CD4-positive, alpha-beta memory T cell (primary cell): ENCODE measurements at regions of chr15 and their contacts with region 1.

Region 1: DNA sequence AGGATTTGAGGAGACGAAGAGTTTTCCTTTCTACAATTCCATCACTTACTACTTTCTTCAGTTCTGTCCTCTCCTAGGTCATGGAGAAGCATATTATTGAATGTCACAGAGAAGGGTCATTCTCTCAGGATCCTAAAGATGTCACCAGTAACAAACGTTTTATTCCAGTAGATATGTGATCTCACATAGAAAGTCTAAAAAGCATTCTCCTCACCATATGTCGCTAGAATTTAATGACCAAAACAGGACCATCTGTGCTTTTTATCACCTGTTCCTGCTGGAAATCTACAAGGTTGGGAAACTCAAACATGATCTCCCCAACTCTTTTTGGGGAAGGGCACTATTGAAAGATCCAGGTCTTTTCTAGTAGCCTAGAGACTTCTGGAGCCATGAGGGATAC is 24.0 kb upstream of the FRMD5 start:
- DNase-seq: no peak
- H3K4me3 ChIP-seq: no peak overlapping the region
- H3K4me3 Mint-ChIP-seq: no peak overlapping the region
- H3K27ac ChIP-seq: no peak overlapping the region
- H3K27ac Mint-ChIP-seq: no peak overlapping the region
- H3K4me1 ChIP-seq: peaks cover 3% of the 10 kb centered on the region
- H3K4me1 Mint-ChIP-seq: peaks cover 2 to 4% (median 3%) of the 10 kb centered on the region in 4 donors
- H3K27me3 ChIP-seq: no peaks in the 10 kb centered on the region
- H3K27me3 Mint-ChIP-seq: peaks cover 12 to 15% of the 10 kb centered on the region in 2 donors

Region 2: GRCh38 chr15:44207643-44208042 is 11.4 kb before region 1 on chr15:
- CTCF ChIA-PET with region 1: interaction called, 14 read pairs
- POLR2A ChIA-PET with region 1: no interaction called
- intact Hi-C with region 1: no loop called
- DNase-seq: no peak
- H3K4me3 ChIP-seq: no peak overlapping the region
- H3K4me3 Mint-ChIP-seq: no peak overlapping the region
- H3K27ac ChIP-seq: no peak overlapping the region
- H3K27ac Mint-ChIP-seq: no peak overlapping the region
- H3K4me1 ChIP-seq: no peaks in the 10 kb centered on the region
- H3K4me1 Mint-ChIP-seq: no peaks in the 10 kb centered on the region
- H3K27me3 ChIP-seq: peaks cover 4% of the 10 kb centered on the region
- H3K27me3 Mint-ChIP-seq: peaks cover 9 to 15% of the 10 kb centered on the region in 2 donors

Region 3: DNA sequence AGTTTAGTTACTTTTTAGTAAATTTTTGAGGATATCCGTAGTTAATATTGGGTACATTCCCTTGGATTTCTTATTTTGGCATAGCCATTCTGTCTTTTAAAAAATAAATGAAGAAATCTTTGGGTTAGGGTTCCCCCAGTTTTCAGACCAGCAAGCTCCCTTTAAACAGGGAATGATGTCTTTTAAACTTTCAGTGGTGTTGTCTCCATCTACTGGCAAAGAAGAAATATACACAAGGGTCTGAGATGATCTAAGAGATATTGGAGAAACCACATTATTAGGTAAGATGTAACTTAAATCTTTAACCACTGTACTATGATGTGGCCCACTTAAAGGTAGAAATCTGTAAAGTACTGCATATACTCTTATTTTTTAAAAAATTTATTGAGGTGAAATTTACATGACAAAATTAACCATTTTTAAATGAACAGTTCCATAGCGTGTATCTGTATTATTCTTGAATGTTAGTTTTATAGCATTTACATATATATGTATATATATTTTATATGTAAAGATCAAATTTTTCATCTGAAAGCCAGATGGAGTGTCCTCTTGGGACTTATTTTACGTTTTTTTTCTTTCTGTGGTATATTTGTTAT is 282.8 kb after region 1 on chr15:
- CTCF ChIA-PET with region 1: interaction called, 4 read pairs
- POLR2A ChIA-PET with region 1: no interaction called
- intact Hi-C with region 1: loop called (anchors 1 kb)
- DNase-seq: peak in 4 of 5 donors; percentile 16 to 34 (median 26)
- H3K4me3 ChIP-seq: no peak overlapping the region
- H3K4me3 Mint-ChIP-seq: no peak overlapping the region
- H3K27ac ChIP-seq: no peak overlapping the region
- H3K27ac Mint-ChIP-seq: peak overlapping the region in 1 of 7 donors; percentile 36
- H3K4me1 ChIP-seq: no peaks in the 10 kb centered on the region
- H3K4me1 Mint-ChIP-seq: peaks cover 5 to 7% (median 6%) of the 10 kb centered on the region in 4 donors
- H3K27me3 ChIP-seq: no peaks in the 10 kb centered on the region
- H3K27me3 Mint-ChIP-seq: no peaks in the 10 kb centered on the region